Breast epithelium (tissue), 4 donors: ENCODE measurements at regions of chr20 and their contacts with region 1.

Region 1: DNA sequence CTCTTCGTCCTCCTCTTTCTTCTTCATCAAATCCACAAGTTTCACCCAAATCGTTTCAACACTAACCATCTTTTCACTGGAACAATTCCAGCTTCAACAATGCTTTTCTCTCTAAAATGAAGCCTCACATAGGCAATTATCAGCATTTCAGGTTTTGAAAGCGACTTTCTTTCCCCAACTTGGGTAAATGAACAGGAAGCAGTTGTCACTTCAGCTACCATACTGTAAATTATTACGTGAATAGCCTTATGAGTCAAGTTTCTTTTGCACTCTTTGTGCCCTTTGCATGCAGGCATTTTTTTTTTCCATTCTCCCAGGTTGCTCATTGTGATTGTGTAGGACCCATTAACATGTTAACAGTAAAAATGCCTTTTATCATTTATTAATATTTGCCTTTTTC is 121.7 kb upstream of the BTBD3 start:
- DNase-seq: no peak
- H3K4me3 ChIP-seq: no peak overlapping the region
- H3K27ac ChIP-seq: no peak overlapping the region
- H3K4me1 ChIP-seq: no peaks in the 10 kb centered on the region
- H3K27me3 ChIP-seq: no peaks in the 10 kb centered on the region
- CTCF ChIP-seq: no peak
- POLR2A ChIP-seq: no peak

Region 2: GRCh38 chr20:10213526-10213925 is 1582.5 kb before region 1 on chr20:
- intact Hi-C with region 1: loop called (anchors 5 kb)
- DNase-seq: no peak
- H3K4me3 ChIP-seq: no peak overlapping the region
- H3K27ac ChIP-seq: no peak overlapping the region
- H3K4me1 ChIP-seq: no peaks in the 10 kb centered on the region
- H3K27me3 ChIP-seq: peaks cover 0 to 10% of the 10 kb centered on the region in 2 donors
- CTCF ChIP-seq: no peak
- POLR2A ChIP-seq: no peak

Region 3: DNA sequence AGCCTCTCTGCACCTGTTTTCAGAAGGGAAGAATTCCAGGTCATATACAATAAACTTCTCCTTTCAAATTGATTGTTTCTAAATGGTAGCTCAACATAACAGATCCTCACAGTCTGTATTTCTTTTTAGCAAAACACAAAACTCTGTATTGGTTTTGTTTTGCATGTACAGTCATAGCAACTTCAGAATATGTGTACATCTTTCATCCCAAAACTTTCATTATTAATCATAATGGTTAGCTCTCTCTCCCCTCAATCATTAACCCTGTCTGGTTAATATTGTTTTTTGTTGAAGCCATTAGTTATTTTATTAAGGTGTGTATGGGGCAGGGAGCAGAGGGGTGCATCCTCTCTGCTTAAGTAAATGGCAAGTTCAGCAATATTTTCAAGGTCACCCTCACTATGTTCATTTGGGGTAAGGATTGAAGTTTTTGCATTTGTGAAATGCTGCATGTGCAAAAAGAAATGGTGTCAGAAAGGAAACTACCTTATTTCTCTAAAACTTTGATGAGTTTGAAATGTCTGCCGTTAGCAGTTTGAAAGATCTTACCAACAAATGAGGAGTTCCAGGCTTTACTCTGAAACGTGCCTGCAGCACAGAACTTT is 15.2 kb before region 1 on chr20:
- intact Hi-C with region 1: no loop called
- DNase-seq: no peak
- H3K4me3 ChIP-seq: no peak overlapping the region
- H3K27ac ChIP-seq: no peak overlapping the region
- H3K4me1 ChIP-seq: no peaks in the 10 kb centered on the region
- H3K27me3 ChIP-seq: no peaks in the 10 kb centered on the region
- CTCF ChIP-seq: no peak
- POLR2A ChIP-seq: no peak

Region 4: GRCh38 chr20:13174402-13174801 is 1378.4 kb after region 1 on chr20:
- intact Hi-C with region 1: no loop called
- DNase-seq: no peak
- H3K4me3 ChIP-seq: no peak overlapping the region
- H3K27ac ChIP-seq: no peak overlapping the region
- H3K4me1 ChIP-seq: no peaks in the 10 kb centered on the region
- H3K27me3 ChIP-seq: no peaks in the 10 kb centered on the region
- CTCF ChIP-seq: no peak
- POLR2A ChIP-seq: no peak